Panc1 (cell line): ENCODE measurements at regions of chr5 and their contacts with region 1.

Region 1: GRCh38 chr5:132431632-132432031 is 58.9 kb downstream of the IRF1 start:
- DNase-seq: no peak
- ATAC-seq: no peak
- H3K4me3 ChIP-seq: no peak overlapping the region
- H3K27ac ChIP-seq: no peak overlapping the region
- H3K4me1 ChIP-seq: peaks cover 23% of the 10 kb centered on the region
- H3K27me3 ChIP-seq: no peaks in the 10 kb centered on the region
- CTCF ChIP-seq: no peak

Region 2: GRCh38 chr5:132227485-132228240 is 204.0 kb before region 1 on chr5 and contains the start of gene P4HA2:
- CTCF ChIA-PET with region 1: no interaction called
- POLR2A ChIA-PET with region 1: no interaction called
- in situ Hi-C with region 1: no loop called
- intact Hi-C with region 1: no loop called
- DNase-seq: peak; percentile 8
- ATAC-seq: peak; percentile 97
- H3K4me3 ChIP-seq: peak within 1 kb of the TSS; percentile 57 to 60
- H3K27ac ChIP-seq: peak within 1 kb of the TSS; percentile 48; the same call in 1 of the 2 replicates
- H3K4me1 ChIP-seq: no peaks in the 10 kb centered on the region
- H3K27me3 ChIP-seq: no peaks in the 10 kb centered on the region
- CTCF ChIP-seq: no peak; the same call in 1 of the 2 replicates
- total RNA-seq, gene P4HA2: 25.1 TPM

Region 3: GRCh38 chr5:132453599-132453998 is 22.0 kb after region 1 on chr5:
- CTCF ChIA-PET with region 1: no interaction called
- POLR2A ChIA-PET with region 1: interaction called, 10 read pairs
- in situ Hi-C with region 1: no loop called
- intact Hi-C with region 1: no loop called
- DNase-seq: no peak
- ATAC-seq: no peak
- H3K4me3 ChIP-seq: no peak overlapping the region
- H3K27ac ChIP-seq: no peak overlapping the region
- H3K4me1 ChIP-seq: no peaks in the 10 kb centered on the region
- H3K27me3 ChIP-seq: no peaks in the 10 kb centered on the region
- CTCF ChIP-seq: no peak

Region 4: GRCh38 chr5:132477784-132478365 is 46.2 kb after region 1 on chr5:
- CTCF ChIA-PET with region 1: interaction called, 4 read pairs
- POLR2A ChIA-PET with region 1: no interaction called
- in situ Hi-C with region 1: no loop called
- intact Hi-C with region 1: loop called (anchors 1 kb)
- DNase-seq: no peak
- ATAC-seq: no peak
- H3K4me3 ChIP-seq: no peak overlapping the region
- H3K27ac ChIP-seq: no peak overlapping the region
- H3K4me1 ChIP-seq: peaks cover 9% of the 10 kb centered on the region; the same call in 1 of the 2 replicates
- H3K27me3 ChIP-seq: no peaks in the 10 kb centered on the region
- CTCF ChIP-seq: no peak